ENCODE measurements at regions of chr4 and their contacts with region 1.

Region 1: DNA sequence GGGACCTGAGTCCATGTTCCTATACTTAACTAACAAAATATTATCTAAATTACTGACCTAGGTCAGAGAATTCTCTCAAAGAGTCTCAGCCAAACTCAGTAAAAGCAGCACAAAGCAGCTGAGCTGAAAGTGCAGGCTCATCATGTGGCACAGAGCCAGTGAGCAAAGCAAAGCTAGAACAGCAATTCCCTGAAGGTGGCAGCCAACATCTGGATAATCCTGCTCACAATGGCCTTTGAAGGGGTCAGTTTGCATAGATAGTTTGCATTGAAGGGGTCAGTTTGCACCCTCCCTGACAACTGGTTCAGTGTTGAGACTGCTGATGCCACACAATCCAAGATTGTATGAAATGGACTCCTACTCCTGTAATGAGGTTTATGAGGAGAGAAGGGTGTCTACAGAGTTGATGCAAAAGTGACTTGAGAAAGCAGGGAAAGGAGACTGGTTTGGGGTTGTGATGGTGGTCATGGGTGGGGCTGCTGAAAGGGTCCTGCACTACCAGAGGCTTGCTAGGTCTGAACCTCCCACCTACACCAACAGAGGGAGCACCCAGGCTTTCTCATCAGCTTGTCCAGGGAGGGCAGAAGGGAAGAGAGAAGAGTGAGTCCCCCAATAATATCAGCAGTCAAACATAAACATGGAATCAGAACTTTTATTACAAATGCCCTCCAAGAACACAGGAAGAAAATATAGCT is 39.7 kb downstream of the TRIM61 start:
- DNase-seq: no peak
- H3K4me3 Mint-ChIP-seq: no peak overlapping the region
- H3K27ac Mint-ChIP-seq: no peak overlapping the region
- H3K4me1 Mint-ChIP-seq: no peaks in the 10 kb centered on the region
- H3K27me3 Mint-ChIP-seq: peaks cover 7% of the 10 kb centered on the region

Region 2: DNA sequence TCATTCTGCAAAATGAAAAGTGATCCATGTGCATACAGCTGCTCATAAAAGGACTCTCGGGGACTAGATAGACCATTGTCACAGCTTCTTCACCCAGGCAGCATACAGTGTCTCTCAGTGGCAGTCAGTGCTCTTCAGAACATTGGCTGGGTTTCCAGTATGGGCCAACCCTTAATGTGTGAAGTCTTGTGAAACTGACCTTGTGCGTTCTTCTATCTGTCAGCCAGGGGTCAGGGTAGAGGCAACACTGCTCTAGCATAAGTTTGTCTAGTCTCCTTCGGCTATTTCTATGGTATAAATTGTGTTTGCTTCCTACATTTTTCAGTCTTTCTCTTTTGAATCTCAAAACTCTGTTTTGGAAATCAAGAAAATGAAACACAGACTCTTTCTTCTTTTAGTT is 220.8 kb before region 1 on chr4:
- intact Hi-C with region 1: no loop called
- DNase-seq: no peak
- H3K4me3 Mint-ChIP-seq: no peak overlapping the region
- H3K27ac Mint-ChIP-seq: no peak overlapping the region
- H3K4me1 Mint-ChIP-seq: no peaks in the 10 kb centered on the region
- H3K27me3 Mint-ChIP-seq: no peaks in the 10 kb centered on the region

Region 3: DNA sequence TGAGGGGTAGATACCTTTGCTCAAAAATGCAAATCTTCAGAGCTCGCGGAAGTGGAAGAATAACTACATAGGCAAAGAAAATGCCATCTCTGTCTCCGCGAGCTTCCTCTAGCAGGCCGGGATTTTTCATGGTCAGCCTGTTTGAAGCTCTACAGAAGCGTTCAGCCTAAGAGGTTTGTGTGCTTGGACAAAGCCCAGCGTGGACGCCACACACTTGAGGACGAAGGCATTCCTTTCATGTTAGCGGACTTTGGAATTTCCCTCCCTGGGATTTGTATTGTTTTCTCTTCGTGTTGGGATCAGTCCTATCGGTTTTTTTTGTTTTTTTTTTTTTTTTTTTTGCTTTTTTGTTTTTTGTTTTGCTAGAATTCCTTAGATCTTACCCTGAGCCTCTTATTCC is 130.1 kb before region 1 on chr4:
- intact Hi-C with region 1: no loop called
- DNase-seq: no peak
- H3K4me3 Mint-ChIP-seq: no peak overlapping the region
- H3K27ac Mint-ChIP-seq: no peak overlapping the region
- H3K4me1 Mint-ChIP-seq: no peaks in the 10 kb centered on the region
- H3K27me3 Mint-ChIP-seq: peaks cover 2% of the 10 kb centered on the region

Region 4: DNA sequence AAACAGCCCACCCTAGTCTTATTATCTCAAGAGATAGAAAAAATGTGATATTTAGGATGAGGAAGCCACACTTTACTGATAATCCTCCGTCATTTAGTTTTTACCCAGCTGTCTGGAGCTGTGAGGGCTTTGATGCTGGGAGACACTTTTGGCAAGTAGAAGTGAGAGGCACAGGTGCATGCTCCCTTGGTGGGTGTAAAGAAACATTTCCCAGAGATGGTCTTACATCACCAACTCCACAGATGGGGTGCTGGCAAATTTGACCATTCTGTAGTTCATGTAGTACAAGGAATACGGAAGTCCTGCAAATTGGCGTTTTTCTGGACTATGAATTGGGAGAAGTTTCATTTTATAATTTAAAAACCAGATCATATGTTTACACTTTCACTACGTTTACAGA is 11.3 kb after region 1 on chr4:
- intact Hi-C with region 1: loop called (anchors 1 kb)
- DNase-seq: no peak
- H3K4me3 Mint-ChIP-seq: no peak overlapping the region
- H3K27ac Mint-ChIP-seq: no peak overlapping the region
- H3K4me1 Mint-ChIP-seq: no peaks in the 10 kb centered on the region
- H3K27me3 Mint-ChIP-seq: peaks cover 22% of the 10 kb centered on the region

Region 5: DNA sequence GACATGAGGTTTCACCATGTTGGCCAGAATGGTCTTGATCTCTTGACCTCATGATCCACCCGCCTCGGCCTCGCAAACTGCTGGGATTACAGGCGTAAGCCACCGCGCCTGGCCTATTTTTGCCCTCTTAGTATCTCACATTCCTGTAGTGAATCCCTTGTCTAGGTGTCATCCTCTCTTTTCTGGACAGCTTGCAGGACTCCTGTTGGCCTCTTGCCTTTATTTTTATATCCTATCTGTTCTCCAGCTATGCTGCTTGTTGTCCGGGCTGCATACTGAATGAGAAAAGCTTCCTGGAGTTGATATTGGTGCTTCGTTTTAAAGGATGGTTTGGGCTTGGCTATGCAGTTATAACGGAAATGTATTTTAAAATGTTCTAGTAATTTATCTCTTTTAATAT is 1083.9 kb after region 1 on chr4:
- intact Hi-C with region 1: no loop called
- DNase-seq: no peak
- H3K4me3 Mint-ChIP-seq: no peak overlapping the region
- H3K27ac Mint-ChIP-seq: no peak overlapping the region
- H3K4me1 Mint-ChIP-seq: no peaks in the 10 kb centered on the region
- H3K27me3 Mint-ChIP-seq: no peaks in the 10 kb centered on the region

Measured in activated CD4-positive, alpha-beta T cell treated with anti-CD3 and anti-CD28 coated beads, Interleukin-2, amount 10 ng/mL, durations not matched to agents 24 days and 14 days (primary cell).